ENCODE measurements at regions of chr17 and their contacts with region 1.

Region 1: DNA sequence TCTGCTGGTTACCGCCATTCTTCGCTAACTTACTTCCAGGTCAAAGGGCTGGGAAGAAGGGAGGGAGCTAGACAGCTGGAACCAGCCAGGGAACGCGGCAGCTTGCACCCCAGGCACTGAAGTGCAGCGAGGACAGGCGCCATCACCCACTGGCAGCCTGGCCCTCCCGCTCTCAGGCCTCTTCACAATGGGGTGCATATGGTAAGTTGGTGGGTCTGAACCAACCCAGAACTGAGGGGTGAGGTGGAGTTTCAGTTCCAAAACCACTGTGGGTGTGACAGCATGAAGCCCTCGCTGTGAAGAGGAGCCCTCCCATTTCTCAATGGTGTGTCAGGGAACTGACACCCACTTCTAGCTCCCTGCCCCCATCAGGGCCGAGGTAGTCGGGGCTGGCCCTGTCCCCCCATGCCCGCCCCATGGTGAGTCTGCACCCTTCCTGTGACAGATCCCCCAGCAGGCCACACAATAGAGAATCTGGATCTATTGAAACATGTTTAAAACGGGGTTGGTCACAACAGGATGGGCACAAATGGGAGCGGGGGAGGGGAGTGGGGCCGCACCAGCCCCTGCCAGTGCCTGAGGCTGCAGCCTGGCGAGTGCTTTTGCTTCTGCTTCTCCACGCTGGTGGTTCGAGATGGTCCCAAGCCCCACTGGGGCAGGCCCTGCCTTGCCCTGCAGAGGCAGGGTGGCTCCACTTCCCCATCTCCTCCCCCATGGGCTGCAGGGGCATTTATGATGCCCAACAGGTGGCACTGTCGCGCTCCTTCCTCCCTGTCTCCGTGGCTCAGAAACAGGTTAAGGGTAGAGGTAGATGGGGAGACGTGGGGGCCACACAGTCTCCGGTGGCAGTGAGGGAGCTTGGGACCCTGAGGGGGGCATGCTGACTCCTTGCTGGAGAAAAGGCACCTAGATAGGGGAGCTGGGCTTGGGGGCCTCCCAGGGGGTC is 2.3 kb downstream of the LIMD2 start:
- DNase-seq: peak; percentile 74 to 91 (median 86)
- ATAC-seq: peak; percentile 57
- H3K4me3 ChIP-seq: peak overlapping the region; percentile 81
- H3K4me3 Mint-ChIP-seq: peak overlapping the region; percentile 83 to 100 (median 98)
- H3K27ac ChIP-seq: peak overlapping the region; percentile 93
- H3K27ac Mint-ChIP-seq: peak overlapping the region; percentile 89 to 100 (median 99)
- H3K4me1 ChIP-seq: peaks cover 43 to 46% of the 10 kb centered on the region in 2 donors
- H3K4me1 Mint-ChIP-seq: peaks cover 45 to 61% (median 56%) of the 10 kb centered on the region in 7 donors
- H3K27me3 ChIP-seq: no peaks in the 10 kb centered on the region
- H3K27me3 Mint-ChIP-seq: no peaks in the 10 kb centered on the region

Region 2: DNA sequence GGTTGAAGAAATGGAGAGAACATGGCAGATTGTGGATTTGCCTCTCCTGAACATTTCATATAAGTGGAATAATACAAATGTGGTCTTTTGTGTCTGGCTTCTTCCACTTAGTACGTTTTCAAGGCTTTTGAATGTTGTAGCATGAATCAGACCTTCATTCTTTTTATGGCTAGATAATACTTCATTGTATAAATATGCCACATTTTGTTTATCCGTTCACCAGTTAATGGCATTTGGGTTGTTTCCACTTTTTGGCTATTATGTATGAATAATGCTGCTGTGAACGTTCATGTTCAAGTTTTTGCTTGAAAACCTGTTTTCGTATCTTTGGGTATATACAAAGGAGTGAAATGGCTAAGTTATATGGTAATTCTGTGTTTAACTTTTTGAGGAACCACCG is 601.2 kb before region 1 on chr17:
- CTCF ChIA-PET with region 1: no interaction called
- POLR2A ChIA-PET with region 1: no interaction called
- intact Hi-C with region 1: no loop called
- DNase-seq: no peak
- ATAC-seq: no peak
- H3K4me3 ChIP-seq: no peak overlapping the region
- H3K4me3 Mint-ChIP-seq: no peak overlapping the region
- H3K27ac ChIP-seq: no peak overlapping the region
- H3K27ac Mint-ChIP-seq: no peak overlapping the region
- H3K4me1 ChIP-seq: no peaks in the 10 kb centered on the region
- H3K4me1 Mint-ChIP-seq: peaks cover 0 to 6% (median 0%) of the 10 kb centered on the region in 7 donors
- H3K27me3 ChIP-seq: no peaks in the 10 kb centered on the region
- H3K27me3 Mint-ChIP-seq: no peaks in the 10 kb centered on the region

Region 3: GRCh38 chr17:63425482-63425881 is 272.1 kb before region 1 on chr17:
- CTCF ChIA-PET with region 1: no interaction called
- POLR2A ChIA-PET with region 1: no interaction called
- intact Hi-C with region 1: loop called (anchors 5 kb)
- DNase-seq: peak; percentile 31 to 74 (median 62)
- ATAC-seq: peak; percentile 91
- H3K4me3 ChIP-seq: no peak overlapping the region
- H3K4me3 Mint-ChIP-seq: peak overlapping the region in 4 of 10 donors; percentile 19 to 67 (median 32)
- H3K27ac ChIP-seq: no peak overlapping the region
- H3K27ac Mint-ChIP-seq: peak overlapping the region in 1 of 9 donors; percentile 41
- H3K4me1 ChIP-seq: peaks cover 22 to 26% of the 10 kb centered on the region in 2 donors
- H3K4me1 Mint-ChIP-seq: peaks cover 20 to 39% (median 28%) of the 10 kb centered on the region in 7 donors
- H3K27me3 ChIP-seq: no peaks in the 10 kb centered on the region
- H3K27me3 Mint-ChIP-seq: peaks cover 0 to 22% (median 0%) of the 10 kb centered on the region in 5 donors

Region 4: GRCh38 chr17:63621766-63622519 is 75.7 kb before region 1 on chr17 and contains the start of gene MAP3K3:
- CTCF ChIA-PET with region 1: interaction called, 8 read pairs
- POLR2A ChIA-PET with region 1: interaction called, 99 read pairs
- intact Hi-C with region 1: loop called (anchors 1 kb)
- DNase-seq: peak; percentile 79 to 99 (median 98)
- ATAC-seq: peak; percentile 93
- H3K4me3 ChIP-seq: peak within 1 kb of the TSS; percentile 82
- H3K4me3 Mint-ChIP-seq: peak within 1 kb of the TSS; percentile 96 to 100 (median 99)
- H3K27ac ChIP-seq: peak within 1 kb of the TSS; percentile 75
- H3K27ac Mint-ChIP-seq: peak within 1 kb of the TSS; percentile 83 to 97 (median 95)
- H3K4me1 ChIP-seq: peaks cover 21 to 31% of the 10 kb centered on the region in 2 donors
- H3K4me1 Mint-ChIP-seq: peaks cover 34 to 48% (median 42%) of the 10 kb centered on the region in 7 donors
- H3K27me3 ChIP-seq: peaks cover 0 to 3% of the 10 kb centered on the region in 2 donors
- H3K27me3 Mint-ChIP-seq: peaks cover 0 to 12% (median 0%) of the 10 kb centered on the region in 5 donors
- total RNA-seq, gene MAP3K3: 37.5 to 105 (median 85.5) TPM

Region 5: GRCh38 chr17:63649813-63650212 is 47.8 kb before region 1 on chr17:
- CTCF ChIA-PET with region 1: no interaction called
- POLR2A ChIA-PET with region 1: no interaction called
- intact Hi-C with region 1: no loop called
- DNase-seq: no peak
- ATAC-seq: peak; percentile 55
- H3K4me3 ChIP-seq: no peak overlapping the region
- H3K4me3 Mint-ChIP-seq: no peak overlapping the region
- H3K27ac ChIP-seq: no peak overlapping the region
- H3K27ac Mint-ChIP-seq: peak overlapping the region in 4 of 9 donors; percentile 6 to 75 (median 32)
- H3K4me1 ChIP-seq: peaks cover 0 to 4% of the 10 kb centered on the region in 2 donors
- H3K4me1 Mint-ChIP-seq: peaks cover 11 to 26% (median 16%) of the 10 kb centered on the region in 7 donors
- H3K27me3 ChIP-seq: no peaks in the 10 kb centered on the region
- H3K27me3 Mint-ChIP-seq: no peaks in the 10 kb centered on the region

Region 6: GRCh38 chr17:63714547-63715277 is 17.1 kb after region 1 on chr17:
- CTCF ChIA-PET with region 1: interaction called, 198 read pairs
- POLR2A ChIA-PET with region 1: interaction called, 810 read pairs
- intact Hi-C with region 1: loop called (anchors 1 kb)
- DNase-seq: no peak
- ATAC-seq: no peak
- H3K4me3 ChIP-seq: no peak overlapping the region
- H3K4me3 Mint-ChIP-seq: no peak overlapping the region
- H3K27ac ChIP-seq: no peak overlapping the region
- H3K27ac Mint-ChIP-seq: peak overlapping the region in 3 of 9 donors; percentile 41 to 76 (median 62)
- H3K4me1 ChIP-seq: peaks cover 4 to 11% of the 10 kb centered on the region in 2 donors
- H3K4me1 Mint-ChIP-seq: peaks cover 7 to 21% (median 15%) of the 10 kb centered on the region in 7 donors
- H3K27me3 ChIP-seq: no peaks in the 10 kb centered on the region
- H3K27me3 Mint-ChIP-seq: no peaks in the 10 kb centered on the region

Region 7: GRCh38 chr17:63768433-63768832 is 70.8 kb after region 1 on chr17:
- CTCF ChIA-PET with region 1: interaction called, 9 read pairs
- POLR2A ChIA-PET with region 1: interaction called, 117 read pairs
- intact Hi-C with region 1: loop called (anchors 1 kb)
- DNase-seq: no peak
- ATAC-seq: no peak
- H3K4me3 ChIP-seq: no peak overlapping the region
- H3K4me3 Mint-ChIP-seq: peak overlapping the region in 1 of 10 donors; percentile 2
- H3K27ac ChIP-seq: no peak overlapping the region
- H3K27ac Mint-ChIP-seq: no peak overlapping the region
- H3K4me1 ChIP-seq: peaks cover 0 to 13% of the 10 kb centered on the region in 2 donors
- H3K4me1 Mint-ChIP-seq: peaks cover 20 to 74% (median 53%) of the 10 kb centered on the region in 7 donors
- H3K27me3 ChIP-seq: no peaks in the 10 kb centered on the region
- H3K27me3 Mint-ChIP-seq: peaks cover 0 to under 1% (median 0%) of the 10 kb centered on the region in 5 donors

Region 8: DNA sequence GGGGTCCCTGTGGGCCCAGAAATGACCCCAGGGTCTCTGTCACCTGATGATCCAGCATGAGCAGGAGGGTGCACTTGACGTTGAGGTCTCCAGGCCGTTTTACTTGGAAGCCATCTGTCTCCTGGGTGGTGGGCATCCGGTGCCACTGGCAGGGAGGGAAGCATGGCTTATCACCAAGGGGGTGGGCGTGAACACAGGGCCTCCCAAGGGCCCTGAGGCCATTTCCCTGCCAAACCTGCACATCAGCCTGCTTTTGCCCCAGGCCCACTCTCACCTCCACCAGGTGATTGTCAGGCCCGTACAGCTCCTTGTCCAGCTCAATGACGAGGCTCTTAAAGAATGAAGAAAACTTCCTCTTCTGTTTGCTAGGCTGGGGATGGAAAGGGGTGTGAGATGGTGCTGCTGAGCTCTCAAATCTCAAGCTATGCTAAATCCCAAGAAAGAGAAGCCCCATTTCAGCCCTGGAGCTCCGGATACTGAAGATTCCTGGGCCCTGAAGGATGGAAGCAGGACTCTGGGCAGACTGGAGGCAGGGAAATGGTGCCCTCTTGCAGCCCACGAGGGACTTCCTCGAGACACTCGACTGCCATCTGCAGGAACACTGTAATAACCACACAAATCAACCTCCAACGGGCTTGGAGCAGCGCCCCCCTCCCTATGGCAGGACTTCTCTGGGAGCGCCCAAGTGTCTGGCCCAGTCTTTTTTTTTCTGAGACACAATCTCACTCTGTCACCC is 137.0 kb after region 1 on chr17:
- CTCF ChIA-PET with region 1: interaction called, 3 read pairs
- POLR2A ChIA-PET with region 1: interaction called, 58 read pairs
- intact Hi-C with region 1: loop called in 1 of 2 experiments (anchors 2 kb)
- DNase-seq: peak in 8 of 9 donors; percentile 45 to 72 (median 61)
- ATAC-seq: peak; percentile 95
- H3K4me3 ChIP-seq: no peak overlapping the region
- H3K4me3 Mint-ChIP-seq: peak overlapping the region in 1 of 10 donors; percentile 37
- H3K27ac ChIP-seq: no peak overlapping the region
- H3K27ac Mint-ChIP-seq: peak overlapping the region; percentile 26 to 86 (median 69)
- H3K4me1 ChIP-seq: peaks cover 23 to 42% of the 10 kb centered on the region in 2 donors
- H3K4me1 Mint-ChIP-seq: peaks cover 21 to 77% (median 67%) of the 10 kb centered on the region in 7 donors
- H3K27me3 ChIP-seq: no peaks in the 10 kb centered on the region
- H3K27me3 Mint-ChIP-seq: no peaks in the 10 kb centered on the region

Region 9: GRCh38 chr17:63946440-63947367 is 249.1 kb after region 1 on chr17:
- CTCF ChIA-PET with region 1: no interaction called
- POLR2A ChIA-PET with region 1: no interaction called
- intact Hi-C with region 1: no loop called
- DNase-seq: peak; percentile 32 to 71 (median 53)
- ATAC-seq: peak; percentile 87
- H3K4me3 ChIP-seq: peak overlapping the region; percentile 44
- H3K4me3 Mint-ChIP-seq: peak overlapping the region; percentile 59 to 86 (median 73)
- H3K27ac ChIP-seq: no peak overlapping the region
- H3K27ac Mint-ChIP-seq: peak overlapping the region in 5 of 9 donors; percentile 25 to 85 (median 39)
- H3K4me1 ChIP-seq: peaks cover 14 to 17% of the 10 kb centered on the region in 2 donors
- H3K4me1 Mint-ChIP-seq: peaks cover 9 to 19% (median 12%) of the 10 kb centered on the region in 7 donors
- H3K27me3 ChIP-seq: no peaks in the 10 kb centered on the region
- H3K27me3 Mint-ChIP-seq: peaks cover 0 to 7% (median 0%) of the 10 kb centered on the region in 5 donors

Region 10: DNA sequence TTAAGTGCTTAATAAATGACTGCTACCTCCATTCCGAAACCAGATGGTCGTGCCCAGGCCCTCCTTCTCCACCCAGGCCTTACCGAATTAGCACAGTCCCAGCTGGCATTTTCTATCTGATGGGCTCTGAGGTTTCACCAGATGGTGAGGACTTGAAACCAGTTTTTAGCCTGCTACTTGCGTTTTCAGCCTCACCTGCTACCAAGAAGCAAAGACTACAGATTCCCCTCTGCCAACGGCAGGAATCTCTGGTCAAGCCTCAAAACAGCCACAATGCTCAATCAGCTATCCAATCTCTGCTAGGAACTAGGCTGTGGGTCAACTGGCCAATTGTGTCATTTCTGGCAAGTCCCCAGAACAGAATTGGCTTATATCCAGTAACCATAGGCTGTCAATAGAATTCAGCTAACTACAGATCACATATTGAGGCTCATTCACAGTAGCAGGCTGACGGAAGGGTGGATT is 681.3 kb after region 1 on chr17:
- CTCF ChIA-PET with region 1: no interaction called
- POLR2A ChIA-PET with region 1: no interaction called
- intact Hi-C with region 1: no loop called
- DNase-seq: no peak
- ATAC-seq: no peak
- H3K4me3 ChIP-seq: no peak overlapping the region
- H3K4me3 Mint-ChIP-seq: no peak overlapping the region
- H3K27ac ChIP-seq: no peak overlapping the region
- H3K27ac Mint-ChIP-seq: peak overlapping the region in 4 of 9 donors; percentile 11 to 85 (median 68)
- H3K4me1 ChIP-seq: peaks cover 0 to 2% of the 10 kb centered on the region in 2 donors
- H3K4me1 Mint-ChIP-seq: peaks cover 0 to 47% (median 18%) of the 10 kb centered on the region in 7 donors
- H3K27me3 ChIP-seq: no peaks in the 10 kb centered on the region
- H3K27me3 Mint-ChIP-seq: peaks cover 0 to 5% (median 0%) of the 10 kb centered on the region in 5 donors

Region 11: DNA sequence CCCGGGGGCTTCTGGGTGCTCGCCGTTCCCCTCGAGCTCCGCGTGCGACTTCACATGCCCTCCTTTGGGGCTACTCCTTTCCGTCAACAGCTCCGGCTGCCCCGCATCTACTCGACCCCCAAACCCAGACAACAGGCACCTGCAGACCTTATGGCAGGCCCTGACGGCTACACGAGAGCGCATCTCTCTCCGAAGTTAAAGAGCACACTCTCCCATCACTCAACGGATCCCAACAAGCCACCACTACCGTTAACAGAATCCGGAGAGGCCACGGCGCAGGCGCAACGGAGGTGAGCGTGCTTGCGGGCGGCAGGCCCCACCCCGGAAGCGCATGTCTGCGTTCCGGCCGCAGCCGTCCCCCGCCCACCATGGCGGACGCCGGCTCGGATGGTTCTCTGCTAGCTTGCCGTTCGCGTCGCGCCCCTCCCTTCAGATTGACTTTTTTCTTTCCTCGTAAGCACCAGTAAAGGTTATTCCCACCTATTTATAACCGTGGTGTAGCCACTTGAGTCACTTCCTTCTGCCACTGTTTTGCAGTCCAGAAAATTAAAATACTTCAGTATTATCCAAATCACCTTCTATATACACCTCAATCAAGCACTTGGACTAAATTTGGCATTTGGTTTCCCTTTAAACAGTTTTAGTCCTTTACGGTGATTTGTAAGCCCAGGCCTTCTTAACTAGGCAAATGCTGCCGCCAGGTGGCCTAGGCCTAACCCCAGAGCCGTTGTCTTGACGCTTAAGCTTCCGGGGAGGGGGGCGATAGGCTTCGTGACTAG is 799.4 kb after region 1 on chr17 and contains the start of gene POLG2:
- CTCF ChIA-PET with region 1: no interaction called
- POLR2A ChIA-PET with region 1: interaction called, 5 read pairs
- intact Hi-C with region 1: loop called in 1 of 2 experiments (anchors 2 kb)
- DNase-seq: peak; percentile 93 to 96 (median 95)
- ATAC-seq: peak; percentile 89
- H3K4me3 ChIP-seq: peak within 1 kb of the TSS; percentile 69
- H3K4me3 Mint-ChIP-seq: peak within 1 kb of the TSS; percentile 96 to 100 (median 99)
- H3K27ac ChIP-seq: peak within 1 kb of the TSS; percentile 83
- H3K27ac Mint-ChIP-seq: peak within 1 kb of the TSS; percentile 91 to 100 (median 97)
- H3K4me1 ChIP-seq: peaks cover 23 to 31% of the 10 kb centered on the region in 2 donors
- H3K4me1 Mint-ChIP-seq: peaks cover 44 to 88% (median 76%) of the 10 kb centered on the region in 7 donors
- H3K27me3 ChIP-seq: no peaks in the 10 kb centered on the region
- H3K27me3 Mint-ChIP-seq: no peaks in the 10 kb centered on the region
- total RNA-seq, gene POLG2: 34.5 to 69.6 (median 41.9) TPM

Measured in naive thymus-derived CD4-positive, alpha-beta T cell (primary cell).